Activated CD4-positive, alpha-beta T cell treated with anti-CD3 and anti-CD28 coated beads, Interleukin-2, amount 10 ng/mL, durations not matched to agents 7 days and 5 days (primary cell): ENCODE measurements at regions of chr12 and their contacts with region 1.

Region 1: DNA sequence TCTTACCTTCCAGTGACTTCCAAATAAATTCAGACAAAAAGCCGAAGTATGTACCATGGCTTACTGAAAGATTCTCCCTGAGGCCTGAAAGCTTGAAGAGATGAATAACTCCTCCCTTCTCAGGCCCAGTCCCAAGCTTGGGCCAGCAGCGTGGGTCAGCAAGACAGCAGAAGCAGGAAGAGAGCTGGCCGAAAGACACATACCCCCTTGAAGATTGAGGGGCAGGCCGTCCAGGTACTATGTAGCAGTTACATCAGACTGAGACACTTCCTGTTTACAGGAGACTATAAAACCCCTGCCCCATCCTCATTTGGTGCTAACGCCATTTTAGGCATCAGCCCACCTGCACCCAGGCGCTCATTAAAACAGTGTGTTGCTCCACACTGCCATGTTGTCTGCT is 15.0 kb downstream of the NDUFA12 start:
- DNase-seq: peak; percentile 15
- H3K4me3 Mint-ChIP-seq: no peak overlapping the region
- H3K27ac Mint-ChIP-seq: peak overlapping the region; percentile 84
- H3K4me1 Mint-ChIP-seq: peaks cover 51% of the 10 kb centered on the region
- H3K27me3 Mint-ChIP-seq: no peaks in the 10 kb centered on the region

Region 2: DNA sequence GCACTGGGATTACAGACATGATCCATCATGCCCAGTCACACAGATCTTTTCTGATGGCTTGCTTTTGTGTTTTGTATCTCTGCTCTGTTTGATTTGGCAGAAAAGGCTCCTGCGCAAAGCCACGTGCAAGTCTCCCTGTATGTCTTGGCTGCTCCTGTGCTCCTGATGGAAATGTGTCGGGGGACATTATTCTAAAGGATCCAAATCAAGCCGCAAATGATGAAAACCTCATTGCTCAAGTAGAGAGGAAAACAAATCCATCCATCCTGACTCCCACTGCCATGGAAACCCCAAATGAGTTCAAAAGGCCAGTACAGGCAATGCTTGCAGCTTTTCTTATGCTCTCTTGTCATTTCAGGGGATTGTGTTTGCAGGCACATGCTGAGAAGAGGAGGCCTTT is 78.8 kb before region 1 on chr12:
- CTCF ChIA-PET with region 1: no interaction called
- POLR2A ChIA-PET with region 1: no interaction called
- DNase-seq: no peak
- H3K4me3 Mint-ChIP-seq: no peak overlapping the region
- H3K27ac Mint-ChIP-seq: no peak overlapping the region
- H3K4me1 Mint-ChIP-seq: no peaks in the 10 kb centered on the region
- H3K27me3 Mint-ChIP-seq: no peaks in the 10 kb centered on the region

Region 3: GRCh38 chr12:95003213-95003920 is 14.9 kb after region 1 on chr12 and contains the start of gene NDUFA12:
- CTCF ChIA-PET with region 1: interaction called, 14 read pairs
- POLR2A ChIA-PET with region 1: no interaction called
- DNase-seq: peak; percentile 96
- H3K4me3 Mint-ChIP-seq: peak within 1 kb of the TSS; percentile 94
- H3K27ac Mint-ChIP-seq: peak within 1 kb of the TSS; percentile 92
- H3K4me1 Mint-ChIP-seq: peaks cover 57% of the 10 kb centered on the region
- H3K27me3 Mint-ChIP-seq: no peaks in the 10 kb centered on the region
- total RNA-seq, gene NDUFA12: 172 to 219 TPM

Region 4: GRCh38 chr12:95014554-95014953 is 26.1 kb after region 1 on chr12:
- CTCF ChIA-PET with region 1: no interaction called
- POLR2A ChIA-PET with region 1: no interaction called
- DNase-seq: no peak
- H3K4me3 Mint-ChIP-seq: no peak overlapping the region
- H3K27ac Mint-ChIP-seq: no peak overlapping the region
- H3K4me1 Mint-ChIP-seq: no peaks in the 10 kb centered on the region
- H3K27me3 Mint-ChIP-seq: no peaks in the 10 kb centered on the region